Kidney (tissue), 22 donors: ENCODE measurements at regions of chr6 and their contacts with region 1.

Region 1: DNA sequence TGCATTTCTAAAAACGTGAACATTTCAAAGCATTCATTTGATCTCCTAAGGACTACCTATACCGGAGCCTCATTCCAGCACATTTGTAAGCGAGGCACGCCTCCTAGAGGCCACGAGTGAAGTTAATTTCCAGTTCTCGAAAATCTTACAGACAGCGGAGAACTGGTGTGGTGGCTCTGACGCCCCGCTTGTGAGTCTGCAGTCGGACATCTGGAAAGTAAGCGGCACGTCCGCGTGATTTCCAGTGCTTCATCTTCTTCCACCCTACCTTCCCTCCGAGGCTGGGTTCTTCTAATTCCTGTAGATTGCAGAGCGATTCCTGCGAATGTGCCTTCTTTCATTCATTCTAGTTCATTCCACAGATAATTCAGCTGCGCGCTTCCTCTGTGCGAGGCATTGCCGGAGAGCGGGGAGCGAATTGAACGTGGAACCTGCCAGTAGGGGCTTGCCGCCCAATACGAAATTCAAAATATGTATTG is 810 bp upstream of the PRIM2 start:
- DNase-seq: peak; percentile 83 to 96 (median 91)
- H3K4me3 ChIP-seq: peak overlapping the region; percentile 88 to 95 (median 92)
- H3K27ac ChIP-seq: peak overlapping the region in 1 of 2 donors; percentile 35
- H3K4me1 ChIP-seq: peaks cover 0 to 4% (median 4%) of the 10 kb centered on the region in 3 donors
- H3K27me3 ChIP-seq: no peaks in the 10 kb centered on the region
- CTCF ChIP-seq: peak; percentile 92

Region 2: DNA sequence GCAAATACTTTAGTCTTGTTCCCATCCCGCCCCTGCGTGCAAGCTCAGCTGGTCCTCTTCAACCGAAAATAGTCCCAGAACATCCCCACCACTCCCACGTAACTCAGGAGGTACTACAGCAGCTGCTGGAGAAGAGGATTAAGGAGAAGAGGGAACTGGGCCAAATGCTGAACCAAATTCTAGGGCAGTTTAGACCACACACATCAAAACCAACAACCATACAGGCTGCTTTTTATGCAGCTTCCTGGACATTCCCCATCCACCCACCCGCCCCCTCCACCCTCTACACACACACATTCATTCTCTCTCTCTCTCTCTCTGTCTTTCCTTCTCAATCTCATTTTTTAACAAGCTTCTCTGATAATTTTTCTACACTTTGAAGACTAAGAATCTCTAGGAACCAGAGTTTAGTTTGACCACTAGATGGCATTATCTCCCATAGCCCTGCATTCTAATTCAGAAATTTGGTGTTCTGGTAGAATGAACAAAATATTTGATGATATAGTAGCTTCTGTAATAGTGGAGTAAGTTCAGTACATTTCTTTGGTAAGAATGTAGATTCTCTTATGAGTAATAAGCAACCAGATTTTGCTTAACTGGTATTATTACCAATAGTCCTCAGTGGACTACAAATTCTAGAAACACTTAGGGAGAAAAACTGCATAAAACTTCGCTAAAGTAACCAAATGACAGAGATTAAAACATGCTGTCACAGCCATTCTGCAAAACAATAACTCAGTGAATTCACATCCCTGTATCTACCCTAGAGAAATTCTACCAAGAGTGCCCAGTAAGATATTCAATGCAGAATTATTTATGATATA is 413.8 kb before region 1 on chr6:
- intact Hi-C with region 1: loop called (anchors 10 kb)
- DNase-seq: peak in 2 of 5 donors; percentile 66 to 67
- H3K4me3 ChIP-seq: no peak overlapping the region
- H3K27ac ChIP-seq: no peak overlapping the region
- H3K4me1 ChIP-seq: no peaks in the 10 kb centered on the region
- H3K27me3 ChIP-seq: no peaks in the 10 kb centered on the region
- CTCF ChIP-seq: peak; percentile 60

Region 3: GRCh38 chr6:57224769-57225515 is 91.7 kb before region 1 on chr6:
- intact Hi-C with region 1: no loop called
- DNase-seq: peak in 1 of 5 donors; percentile 18
- H3K4me3 ChIP-seq: no peak overlapping the region
- H3K27ac ChIP-seq: no peak overlapping the region
- H3K4me1 ChIP-seq: peaks cover 0 to 5% (median 0%) of the 10 kb centered on the region in 3 donors
- H3K27me3 ChIP-seq: no peaks in the 10 kb centered on the region
- CTCF ChIP-seq: no peak